AG04450 (cell line): ENCODE measurements at regions of chr1 and their contacts with region 1.

Region 1: GRCh38 chr1:167542109-167543032 is 11.2 kb downstream of the CREG1 start:
- DNase-seq: no peak
- H3K4me3 ChIP-seq: no peak overlapping the region
- H3K27ac ChIP-seq: no peak overlapping the region
- H3K27me3 ChIP-seq: no peaks in the 10 kb centered on the region
- CTCF ChIP-seq: no peak

Region 2: DNA sequence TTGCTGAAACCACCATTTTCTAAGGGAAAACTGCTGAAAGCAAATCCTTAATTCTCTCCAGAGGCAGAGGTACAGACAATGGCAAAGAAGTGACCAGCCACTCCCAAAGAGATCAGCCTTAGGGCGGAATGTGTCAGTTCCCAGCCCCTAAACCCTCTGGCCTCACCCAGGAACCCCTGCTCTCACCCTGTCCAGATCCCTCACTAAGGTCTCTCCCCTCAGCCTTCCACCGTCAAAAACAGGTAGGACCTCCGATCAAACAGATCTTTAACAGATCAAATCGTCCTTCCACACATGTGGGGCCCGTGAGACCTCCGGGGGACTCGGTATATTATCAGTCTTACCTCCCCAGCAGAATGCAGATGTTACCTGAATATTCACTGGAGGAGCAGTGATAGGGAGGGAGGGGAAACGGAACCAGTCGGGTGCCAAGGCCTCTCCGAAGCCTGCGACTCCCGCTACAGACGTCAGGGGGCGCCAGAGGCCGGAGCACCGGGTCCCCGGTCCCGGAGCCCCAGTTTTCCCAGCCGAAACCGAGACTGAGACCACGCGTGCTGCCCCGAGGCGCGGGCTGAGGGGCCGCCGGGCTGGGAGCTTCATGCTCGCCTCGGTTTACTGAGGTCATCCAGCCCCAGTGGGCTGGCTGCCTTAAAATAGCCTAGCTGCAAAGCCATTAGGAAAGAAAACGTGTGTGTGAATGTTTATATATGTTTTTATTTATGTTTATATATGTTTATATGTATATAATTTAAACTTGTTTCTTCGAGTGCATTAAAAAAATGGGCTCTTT is 475.8 kb before region 1 on chr1:
- CTCF ChIA-PET with region 1: interaction called, 16 read pairs
- POLR2A ChIA-PET with region 1: no interaction called
- DNase-seq: no peak
- H3K4me3 ChIP-seq: peak overlapping the region; percentile 36; the same call in 1 of the 2 replicates
- H3K27ac ChIP-seq: no peak overlapping the region
- H3K27me3 ChIP-seq: no peaks in the 10 kb centered on the region
- CTCF ChIP-seq: peak; percentile 94

Region 3: DNA sequence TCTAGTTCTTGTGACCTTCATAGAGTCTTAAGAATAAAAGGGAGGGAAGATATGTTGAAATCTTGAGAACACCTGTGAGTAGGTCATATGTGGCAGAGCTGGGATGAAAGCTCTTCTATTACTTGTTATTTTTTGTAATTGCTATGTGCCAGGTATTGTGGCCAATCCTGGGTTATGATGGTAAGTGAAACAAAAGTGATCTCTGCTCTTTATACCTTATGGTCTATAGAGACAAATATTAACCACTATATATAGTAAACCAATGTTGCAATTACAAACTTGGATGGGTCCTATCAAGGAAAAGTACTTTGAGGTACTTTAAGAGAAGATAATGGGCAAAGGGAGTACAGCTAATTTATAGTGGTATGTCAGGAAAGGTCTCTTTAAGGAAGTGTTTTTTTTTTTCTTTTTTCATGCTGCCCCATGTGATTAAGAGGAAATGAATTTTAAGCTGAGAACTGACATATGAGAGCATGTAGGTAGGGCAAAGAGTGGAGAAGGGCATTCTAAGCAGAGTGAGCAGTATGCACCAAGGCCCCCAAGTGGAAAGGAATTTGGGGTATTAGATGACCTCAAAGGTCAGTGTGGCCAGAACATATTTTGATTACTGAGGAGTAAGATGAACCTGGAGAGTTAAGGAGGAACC is 278.4 kb before region 1 on chr1:
- CTCF ChIA-PET with region 1: interaction called, 11 read pairs
- POLR2A ChIA-PET with region 1: no interaction called
- DNase-seq: no peak
- H3K4me3 ChIP-seq: no peak overlapping the region
- H3K27ac ChIP-seq: no peak overlapping the region
- H3K27me3 ChIP-seq: no peaks in the 10 kb centered on the region
- CTCF ChIP-seq: no peak

Region 4: GRCh38 chr1:167553136-167554027 is 11.0 kb after region 1 on chr1 and contains the start of gene CREG1:
- CTCF ChIA-PET with region 1: interaction called, 103 read pairs
- POLR2A ChIA-PET with region 1: no interaction called
- DNase-seq: peak; percentile 59
- H3K4me3 ChIP-seq: peak within 1 kb of the TSS; percentile 60
- H3K27ac ChIP-seq: no peak within 1 kb of the TSS
- H3K27me3 ChIP-seq: peaks cover 10% of the 10 kb centered on the region
- CTCF ChIP-seq: no peak
- polyA plus RNA-seq, gene CREG1: 23.1 and 31.2 TPM in 2 replicates

Region 5: DNA sequence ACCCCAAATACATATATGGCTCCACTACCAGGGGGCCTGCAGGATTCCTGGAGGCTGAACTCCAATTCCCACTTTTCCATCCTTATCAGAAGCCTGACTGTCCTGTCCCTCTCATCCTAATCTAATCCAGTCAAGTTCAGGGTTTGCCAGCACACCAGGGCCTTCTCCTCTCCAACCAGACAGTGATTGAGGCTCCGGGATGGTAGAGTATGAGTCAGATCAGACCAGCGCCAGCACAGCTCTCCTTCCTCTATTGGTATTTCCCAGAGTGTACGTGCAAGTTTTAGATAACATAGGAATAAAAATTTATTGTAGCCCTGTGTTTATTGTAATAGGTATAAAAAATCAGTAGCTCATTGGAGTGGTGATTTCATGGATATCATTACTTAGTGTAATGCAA is 63.2 kb after region 1 on chr1:
- CTCF ChIA-PET with region 1: no interaction called
- POLR2A ChIA-PET with region 1: no interaction called
- DNase-seq: no peak
- H3K4me3 ChIP-seq: no peak overlapping the region
- H3K27ac ChIP-seq: no peak overlapping the region
- H3K27me3 ChIP-seq: peaks cover 6% of the 10 kb centered on the region
- CTCF ChIP-seq: no peak

Region 6: DNA sequence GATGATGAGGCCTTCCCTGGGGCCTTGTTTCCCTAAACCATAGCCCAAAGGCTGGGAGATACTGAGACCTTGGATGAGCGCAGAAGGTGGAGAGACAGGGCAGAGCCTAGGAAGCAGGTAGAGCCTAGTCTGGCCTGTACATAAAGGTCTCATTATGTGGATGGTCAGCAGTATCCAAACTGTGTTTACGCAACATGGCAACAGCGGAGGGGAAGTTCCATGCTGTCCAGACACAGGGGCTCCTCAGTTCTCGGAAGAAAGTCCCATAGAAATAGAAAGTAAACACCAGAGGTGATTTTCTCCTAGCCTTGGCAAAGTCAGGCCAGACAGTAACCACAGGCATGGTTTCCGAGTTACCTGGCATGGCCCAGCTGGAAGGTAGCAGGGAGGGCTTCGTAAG is 137.3 kb after region 1 on chr1:
- CTCF ChIA-PET with region 1: no interaction called
- POLR2A ChIA-PET with region 1: no interaction called
- DNase-seq: no peak
- H3K4me3 ChIP-seq: no peak overlapping the region
- H3K27ac ChIP-seq: no peak overlapping the region
- H3K27me3 ChIP-seq: peaks cover 28% of the 10 kb centered on the region
- CTCF ChIP-seq: no peak